Naive thymus-derived CD4-positive, alpha-beta T cell (primary cell): ENCODE measurements at regions of chr12 and their contacts with region 1.

Region 1: DNA sequence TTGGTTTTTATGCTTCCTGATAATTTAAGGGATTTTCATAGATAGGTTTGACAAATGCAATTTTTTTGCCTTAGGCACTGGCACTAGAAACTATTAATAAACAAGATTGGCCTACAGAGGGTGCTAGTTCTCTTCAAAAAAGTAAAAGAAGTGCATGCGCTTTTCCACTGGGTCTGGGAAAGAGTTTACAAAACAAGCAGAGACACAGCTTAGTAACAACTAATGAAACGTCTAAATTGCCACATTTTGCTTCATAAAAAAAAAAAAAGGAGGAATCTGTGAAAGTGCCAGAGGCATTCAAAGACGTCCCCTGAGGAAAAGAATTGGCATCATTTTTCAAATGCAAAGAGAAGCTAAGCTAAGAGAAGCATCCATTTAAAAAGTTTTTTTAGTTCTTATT is 58.3 kb upstream of the EEA1 start:
- DNase-seq: peak in 7 of 9 donors; percentile 41 to 66 (median 56)
- ATAC-seq: peak; percentile 81
- H3K4me3 ChIP-seq: no peak overlapping the region
- H3K4me3 Mint-ChIP-seq: peak overlapping the region in 9 of 10 donors; percentile 18 to 80 (median 65)
- H3K27ac ChIP-seq: no peak overlapping the region
- H3K27ac Mint-ChIP-seq: peak overlapping the region in 5 of 9 donors; percentile 35 to 68 (median 59)
- H3K4me1 ChIP-seq: peaks cover 0 to 8% of the 10 kb centered on the region in 2 donors
- H3K4me1 Mint-ChIP-seq: peaks cover 5 to 13% (median 12%) of the 10 kb centered on the region in 7 donors
- H3K27me3 ChIP-seq: no peaks in the 10 kb centered on the region
- H3K27me3 Mint-ChIP-seq: peaks cover 0 to 5% (median 0%) of the 10 kb centered on the region in 5 donors

Region 2: DNA sequence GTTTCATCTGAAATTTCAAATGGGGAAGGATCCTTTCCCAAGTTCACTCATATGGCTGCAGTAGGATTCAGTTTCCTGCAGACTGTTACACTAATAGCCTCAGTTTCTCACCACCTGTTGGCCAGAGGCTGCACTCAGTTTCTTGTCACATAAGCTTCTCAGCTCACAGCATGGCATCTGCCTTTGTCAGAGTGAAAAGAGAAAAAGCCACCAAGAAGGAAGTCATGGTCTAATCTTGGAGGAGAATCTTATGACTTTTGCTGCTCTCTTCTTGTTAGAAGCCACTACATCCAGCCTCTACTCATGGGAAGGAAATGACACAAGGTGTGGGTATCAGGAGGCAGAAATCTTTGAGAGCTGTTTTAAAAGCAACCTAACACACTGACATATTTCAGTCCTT is 802.3 kb before region 1 on chr12:
- CTCF ChIA-PET with region 1: no interaction called
- POLR2A ChIA-PET with region 1: no interaction called
- intact Hi-C with region 1: no loop called
- DNase-seq: peak in 8 of 9 donors; percentile 30 to 70 (median 56)
- ATAC-seq: peak; percentile 88
- H3K4me3 ChIP-seq: no peak overlapping the region
- H3K4me3 Mint-ChIP-seq: peak overlapping the region; percentile 28 to 77 (median 68)
- H3K27ac ChIP-seq: peak overlapping the region; percentile 74
- H3K27ac Mint-ChIP-seq: peak overlapping the region; percentile 83 to 96 (median 93)
- H3K4me1 ChIP-seq: peaks cover 22 to 29% of the 10 kb centered on the region in 2 donors
- H3K4me1 Mint-ChIP-seq: peaks cover 23 to 71% (median 60%) of the 10 kb centered on the region in 7 donors
- H3K27me3 ChIP-seq: no peaks in the 10 kb centered on the region
- H3K27me3 Mint-ChIP-seq: no peaks in the 10 kb centered on the region

Region 3: GRCh38 chr12:92827836-92828431 is 159.4 kb before region 1 on chr12:
- CTCF ChIA-PET with region 1: interaction called, 4 read pairs
- POLR2A ChIA-PET with region 1: no interaction called
- intact Hi-C with region 1: loop called (anchors 1 to 2 kb)
- DNase-seq: peak in 7 of 9 donors; percentile 19 to 58 (median 37)
- ATAC-seq: peak; percentile 74
- H3K4me3 ChIP-seq: no peak overlapping the region
- H3K4me3 Mint-ChIP-seq: no peak overlapping the region
- H3K27ac ChIP-seq: no peak overlapping the region
- H3K27ac Mint-ChIP-seq: no peak overlapping the region
- H3K4me1 ChIP-seq: no peaks in the 10 kb centered on the region
- H3K4me1 Mint-ChIP-seq: peaks cover 0 to 8% (median 2%) of the 10 kb centered on the region in 7 donors
- H3K27me3 ChIP-seq: no peaks in the 10 kb centered on the region
- H3K27me3 Mint-ChIP-seq: no peaks in the 10 kb centered on the region

Region 4: DNA sequence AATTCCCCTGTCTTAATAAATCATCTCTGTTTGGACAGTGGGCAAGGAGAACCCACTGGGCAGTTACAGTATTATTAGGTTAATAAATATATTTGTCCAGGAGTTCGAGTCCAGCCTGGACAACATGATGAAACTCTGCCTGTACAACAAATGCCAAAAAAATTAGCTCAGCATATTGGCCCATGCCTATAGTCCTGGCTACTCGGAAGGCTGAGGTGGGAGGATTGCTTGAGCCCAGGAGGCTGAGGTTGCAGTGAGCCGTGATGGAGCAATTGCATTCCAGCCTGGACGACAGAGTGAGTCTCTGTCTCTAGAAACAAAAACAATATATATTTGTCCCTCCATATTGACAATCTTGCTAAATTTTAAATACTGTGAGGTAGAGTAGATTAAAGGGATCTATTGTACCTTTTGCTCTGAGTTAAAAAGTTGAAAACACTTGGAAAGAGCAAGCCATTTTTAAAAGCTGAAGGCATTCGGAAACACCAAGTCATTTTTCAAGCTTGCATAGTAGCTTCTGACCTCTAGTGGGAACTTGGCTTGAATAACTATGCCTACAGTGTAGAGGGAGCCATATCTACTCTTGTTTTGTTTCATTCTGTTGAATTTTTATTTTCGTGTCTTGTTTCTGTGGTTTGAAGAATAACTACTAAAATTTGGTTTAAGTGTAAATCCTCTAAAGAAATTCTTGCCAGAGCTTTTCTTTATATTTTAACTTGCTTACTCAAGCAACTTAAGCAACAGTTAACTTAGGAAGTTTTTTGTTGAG is 43.7 kb before region 1 on chr12:
- CTCF ChIA-PET with region 1: no interaction called
- POLR2A ChIA-PET with region 1: no interaction called
- intact Hi-C with region 1: no loop called
- DNase-seq: no peak
- ATAC-seq: no peak
- H3K4me3 ChIP-seq: no peak overlapping the region
- H3K4me3 Mint-ChIP-seq: no peak overlapping the region
- H3K27ac ChIP-seq: no peak overlapping the region
- H3K27ac Mint-ChIP-seq: no peak overlapping the region
- H3K4me1 ChIP-seq: no peaks in the 10 kb centered on the region
- H3K4me1 Mint-ChIP-seq: peaks cover 0 to 7% (median 3%) of the 10 kb centered on the region in 7 donors
- H3K27me3 ChIP-seq: no peaks in the 10 kb centered on the region
- H3K27me3 Mint-ChIP-seq: peaks cover 0 to 3% (median 0%) of the 10 kb centered on the region in 5 donors

Region 5: DNA sequence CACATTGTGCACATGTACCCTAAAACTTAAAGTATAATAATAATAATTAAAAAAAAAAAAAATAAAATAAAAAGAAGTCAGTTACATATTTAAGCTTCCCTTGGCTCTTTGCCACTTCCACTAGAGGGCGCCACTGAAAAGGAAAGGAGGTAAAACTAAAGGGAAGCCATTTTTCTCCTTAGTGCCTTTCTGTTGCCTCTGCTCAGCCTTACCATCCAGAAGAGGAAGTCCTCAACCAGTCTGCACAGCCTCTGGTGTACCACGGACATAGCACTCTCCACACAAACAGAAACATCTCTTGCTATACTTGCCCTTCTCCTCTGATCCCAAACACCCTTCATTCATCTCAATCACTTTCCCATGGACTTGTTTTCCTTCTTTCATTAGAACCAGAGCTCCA is 110.7 kb after region 1 on chr12:
- CTCF ChIA-PET with region 1: interaction called, 8 read pairs
- POLR2A ChIA-PET with region 1: no interaction called
- intact Hi-C with region 1: loop called in 1 of 2 experiments (anchors 5 kb)
- DNase-seq: peak; percentile 33 to 75 (median 62)
- ATAC-seq: peak; percentile 96
- H3K4me3 ChIP-seq: no peak overlapping the region
- H3K4me3 Mint-ChIP-seq: no peak overlapping the region
- H3K27ac ChIP-seq: no peak overlapping the region
- H3K27ac Mint-ChIP-seq: peak overlapping the region in 1 of 9 donors; percentile 2
- H3K4me1 ChIP-seq: no peaks in the 10 kb centered on the region
- H3K4me1 Mint-ChIP-seq: peaks cover 4 to 9% (median 5%) of the 10 kb centered on the region in 7 donors
- H3K27me3 ChIP-seq: no peaks in the 10 kb centered on the region
- H3K27me3 Mint-ChIP-seq: no peaks in the 10 kb centered on the region

Region 6: DNA sequence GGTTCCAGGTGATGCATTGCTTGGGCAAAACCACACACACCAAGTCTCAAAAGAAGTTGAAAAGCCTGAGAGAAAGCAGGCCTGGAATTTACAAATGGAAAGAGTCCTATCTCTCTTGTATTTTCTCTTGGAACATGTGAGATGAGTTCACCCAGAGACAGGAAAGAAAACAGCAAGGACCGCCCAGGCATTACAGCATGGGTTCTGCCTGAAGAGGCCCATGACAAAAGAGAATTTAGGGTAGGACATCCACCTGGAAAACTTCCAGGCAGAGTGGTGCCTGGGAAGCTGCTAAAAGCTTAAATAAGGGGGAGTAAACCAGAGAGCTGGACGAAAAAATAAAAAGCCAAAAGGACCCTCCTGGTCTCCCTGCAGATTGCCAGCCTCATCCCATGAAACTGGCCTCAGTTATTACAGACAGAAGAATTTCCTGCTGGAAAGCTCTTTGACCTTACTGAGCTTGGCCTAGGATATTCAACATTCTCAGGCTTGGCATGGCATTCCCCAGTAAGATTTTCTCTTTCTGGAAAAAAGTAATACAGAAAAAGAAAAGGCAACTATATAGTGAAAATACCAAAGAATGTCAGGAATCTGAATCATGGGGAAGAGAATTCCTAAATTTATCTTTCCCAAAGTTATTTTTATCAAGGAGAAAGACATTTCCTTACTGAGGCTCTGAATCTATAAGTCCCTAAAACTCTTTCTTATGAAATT is 269.1 kb after region 1 on chr12:
- CTCF ChIA-PET with region 1: no interaction called
- POLR2A ChIA-PET with region 1: no interaction called
- intact Hi-C with region 1: no loop called
- DNase-seq: no peak
- ATAC-seq: no peak
- H3K4me3 ChIP-seq: no peak overlapping the region
- H3K4me3 Mint-ChIP-seq: no peak overlapping the region
- H3K27ac ChIP-seq: no peak overlapping the region
- H3K27ac Mint-ChIP-seq: no peak overlapping the region
- H3K4me1 ChIP-seq: no peaks in the 10 kb centered on the region
- H3K4me1 Mint-ChIP-seq: no peaks in the 10 kb centered on the region
- H3K27me3 ChIP-seq: no peaks in the 10 kb centered on the region
- H3K27me3 Mint-ChIP-seq: no peaks in the 10 kb centered on the region

Region 7: DNA sequence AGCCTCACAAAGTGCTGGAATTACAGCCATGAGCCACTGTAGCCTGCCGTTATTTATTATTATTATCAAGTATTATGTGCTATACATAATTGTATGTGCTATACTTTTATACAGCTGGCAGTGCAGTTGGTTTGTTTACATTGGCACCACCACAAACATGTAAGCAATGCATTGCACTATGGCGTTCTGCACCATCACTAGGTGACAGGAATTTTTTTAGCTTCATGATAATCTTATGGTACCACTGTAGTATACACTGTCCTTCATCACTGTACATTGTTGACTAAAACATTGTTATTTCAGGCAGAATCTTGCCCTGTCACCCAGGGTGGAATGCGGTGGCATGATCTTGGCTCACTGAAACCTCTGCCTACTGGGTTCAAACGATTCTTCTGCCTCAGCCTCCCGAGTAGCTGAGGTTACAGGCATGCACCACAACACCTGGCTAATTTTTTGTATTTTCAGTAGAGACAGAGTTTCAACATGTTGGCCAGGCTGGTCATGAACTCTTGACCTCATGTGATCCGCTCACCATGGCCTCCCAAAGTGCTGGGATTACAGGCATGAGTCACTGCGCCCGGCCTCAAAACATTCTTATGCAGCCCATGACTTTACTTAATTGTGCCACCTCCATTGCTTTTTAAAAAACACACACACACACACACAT is 497.1 kb after region 1 on chr12:
- CTCF ChIA-PET with region 1: no interaction called
- POLR2A ChIA-PET with region 1: no interaction called
- intact Hi-C with region 1: loop called in 1 of 2 experiments (anchors 5 kb)
- DNase-seq: no peak
- ATAC-seq: no peak
- H3K4me3 ChIP-seq: no peak overlapping the region
- H3K4me3 Mint-ChIP-seq: no peak overlapping the region
- H3K27ac ChIP-seq: no peak overlapping the region
- H3K27ac Mint-ChIP-seq: no peak overlapping the region
- H3K4me1 ChIP-seq: no peaks in the 10 kb centered on the region
- H3K4me1 Mint-ChIP-seq: peaks cover 0 to 4% (median 0%) of the 10 kb centered on the region in 7 donors
- H3K27me3 ChIP-seq: no peaks in the 10 kb centered on the region
- H3K27me3 Mint-ChIP-seq: no peaks in the 10 kb centered on the region

Region 8: DNA sequence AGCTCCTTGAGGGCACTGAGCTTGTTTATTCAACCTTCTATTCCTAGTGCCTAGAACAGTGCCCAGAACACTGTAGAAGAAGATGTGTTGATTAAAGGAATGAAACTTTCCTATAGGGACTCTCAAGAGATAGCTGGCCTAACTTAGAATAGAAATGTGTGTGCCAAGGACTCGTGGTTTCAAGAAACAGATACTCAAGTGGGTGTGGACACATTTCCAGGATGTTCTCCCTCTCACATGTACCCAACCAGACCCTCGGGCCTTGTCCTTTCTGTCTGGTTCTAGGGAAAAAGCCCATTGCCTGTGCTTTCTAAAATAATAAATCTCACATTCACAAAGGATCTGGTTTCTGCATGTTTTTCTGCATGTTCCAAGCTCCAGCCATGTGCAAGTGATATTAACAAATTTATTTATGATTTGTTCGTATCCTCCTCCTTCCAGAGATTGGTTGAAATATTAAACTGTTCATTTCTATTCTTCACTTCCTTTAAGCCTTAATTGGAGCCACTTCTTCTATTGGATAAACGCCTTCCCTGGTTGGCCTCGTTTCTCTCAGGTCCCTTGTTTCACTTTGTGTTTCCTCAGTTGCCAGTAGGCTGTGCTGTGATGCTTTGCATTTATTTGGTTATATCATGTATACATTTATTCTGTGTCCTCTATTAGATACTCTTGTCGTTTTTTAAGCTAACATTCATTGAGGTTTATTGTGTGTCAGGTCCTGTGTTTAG is 779.6 kb after region 1 on chr12:
- CTCF ChIA-PET with region 1: no interaction called
- POLR2A ChIA-PET with region 1: no interaction called
- intact Hi-C with region 1: loop called in 1 of 2 experiments (anchors 10 kb)
- DNase-seq: peak in 6 of 9 donors; percentile 23 to 58 (median 28)
- ATAC-seq: peak; percentile 84
- H3K4me3 ChIP-seq: no peak overlapping the region
- H3K4me3 Mint-ChIP-seq: peak overlapping the region in 5 of 10 donors; percentile 0 to 53 (median 6)
- H3K27ac ChIP-seq: no peak overlapping the region
- H3K27ac Mint-ChIP-seq: peak overlapping the region in 7 of 9 donors; percentile 6 to 74 (median 27)
- H3K4me1 ChIP-seq: no peaks in the 10 kb centered on the region
- H3K4me1 Mint-ChIP-seq: peaks cover 11 to 53% (median 17%) of the 10 kb centered on the region in 7 donors
- H3K27me3 ChIP-seq: no peaks in the 10 kb centered on the region
- H3K27me3 Mint-ChIP-seq: no peaks in the 10 kb centered on the region